ENCODE measurements at regions of chr4 and their contacts with region 1.

Region 1: GRCh38 chr4:123127218-123127617 is 204.8 kb upstream of the NUDT6 start:
- DNase-seq: no peak
- ATAC-seq: peak in 1 of 2 donors; percentile 39
- H3K4me3 ChIP-seq: no peak overlapping the region
- H3K27ac ChIP-seq: no peak overlapping the region
- H3K4me1 ChIP-seq: no peaks in the 10 kb centered on the region
- H3K27me3 ChIP-seq: no peaks in the 10 kb centered on the region
- CTCF ChIP-seq: peak in 3 of 5 experiments; percentile 7 to 35 (median 28)
- POLR2A ChIP-seq: no peak

Region 2: DNA sequence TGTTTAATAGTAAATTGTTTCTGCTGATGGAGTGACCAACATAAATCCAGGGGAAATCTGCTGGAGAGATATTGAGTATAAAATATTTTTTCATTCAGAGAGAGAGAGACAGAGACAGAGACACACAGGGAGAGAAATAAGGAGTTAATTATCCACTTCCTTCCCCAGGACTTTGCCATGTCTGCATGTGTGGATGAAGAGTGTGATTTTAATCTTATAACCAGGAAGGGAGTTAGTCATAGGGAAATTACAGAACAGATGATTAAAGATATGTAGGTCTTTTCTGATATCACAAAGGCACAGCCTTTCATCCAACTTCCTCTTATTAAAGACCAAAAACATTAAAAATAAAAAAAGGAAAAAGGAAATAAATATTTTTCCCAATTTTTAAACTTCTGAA is 795.6 kb after region 1 on chr4:
- in situ Hi-C with region 1: loop called in 1 of 4 experiments (anchors 25 kb)
- intact Hi-C with region 1: no loop called
- DNase-seq: no peak
- ATAC-seq: no peak
- H3K4me3 ChIP-seq: no peak overlapping the region
- H3K27ac ChIP-seq: no peak overlapping the region
- H3K4me1 ChIP-seq: peaks cover 0 to 3% of the 10 kb centered on the region in 2 donors
- H3K27me3 ChIP-seq: no peaks in the 10 kb centered on the region
- CTCF ChIP-seq: no peak
- POLR2A ChIP-seq: no peak